CD4-positive, alpha-beta memory T cell (primary cell): ENCODE measurements at regions of chr1 and their contacts with region 1.

Region 1: GRCh38 chr1:193537266-193538002 is 351.0 kb upstream of the B3GALT2 start:
- DNase-seq: peak; percentile 61 to 80 (median 73)
- H3K4me3 ChIP-seq: peak overlapping the region in 1 of 2 donors; percentile 12
- H3K4me3 Mint-ChIP-seq: peak overlapping the region; percentile 79 to 88 (median 84)
- H3K27ac ChIP-seq: peak overlapping the region; percentile 71
- H3K27ac Mint-ChIP-seq: peak overlapping the region; percentile 83 to 95 (median 91)
- H3K4me1 ChIP-seq: peaks cover 58% of the 10 kb centered on the region
- H3K4me1 Mint-ChIP-seq: peaks cover 39 to 58% (median 47%) of the 10 kb centered on the region in 4 donors
- H3K27me3 ChIP-seq: no peaks in the 10 kb centered on the region
- H3K27me3 Mint-ChIP-seq: no peaks in the 10 kb centered on the region

Region 2: DNA sequence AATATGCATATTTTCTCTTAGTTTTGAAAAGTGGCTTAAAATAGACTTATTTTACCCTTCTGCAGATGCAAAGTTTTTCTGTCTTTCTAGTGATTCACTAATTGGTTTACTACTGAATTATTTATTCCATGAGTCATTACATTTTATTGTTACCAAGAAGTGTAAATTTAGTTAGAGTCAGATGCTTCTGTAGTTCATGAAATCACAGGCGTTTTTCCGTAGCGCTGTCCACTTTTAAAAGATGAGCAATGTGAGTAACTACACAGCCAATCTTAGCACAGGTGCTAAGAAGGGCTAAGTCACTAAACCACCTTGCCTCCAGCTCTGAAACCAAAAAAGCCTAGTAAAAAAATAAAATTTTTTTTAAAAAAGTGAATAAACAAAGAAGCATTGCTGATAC is 876.8 kb before region 1 on chr1:
- CTCF ChIA-PET with region 1: no interaction called
- POLR2A ChIA-PET with region 1: no interaction called
- intact Hi-C with region 1: no loop called
- DNase-seq: no peak
- H3K4me3 ChIP-seq: no peak overlapping the region
- H3K4me3 Mint-ChIP-seq: no peak overlapping the region
- H3K27ac ChIP-seq: no peak overlapping the region
- H3K27ac Mint-ChIP-seq: no peak overlapping the region
- H3K4me1 ChIP-seq: no peaks in the 10 kb centered on the region
- H3K4me1 Mint-ChIP-seq: no peaks in the 10 kb centered on the region
- H3K27me3 ChIP-seq: no peaks in the 10 kb centered on the region
- H3K27me3 Mint-ChIP-seq: peaks cover 0 to 3% of the 10 kb centered on the region in 2 donors

Region 3: GRCh38 chr1:193406901-193407300 is 130.5 kb before region 1 on chr1:
- CTCF ChIA-PET with region 1: no interaction called
- POLR2A ChIA-PET with region 1: interaction called, 3 read pairs
- intact Hi-C with region 1: loop called (anchors 2 kb)
- DNase-seq: peak in 4 of 5 donors; percentile 48 to 63 (median 56)
- H3K4me3 ChIP-seq: no peak overlapping the region
- H3K4me3 Mint-ChIP-seq: peak overlapping the region in 6 of 8 donors; percentile 0 to 29 (median 8)
- H3K27ac ChIP-seq: no peak overlapping the region
- H3K27ac Mint-ChIP-seq: peak overlapping the region in 4 of 7 donors; percentile 15 to 81 (median 52)
- H3K4me1 ChIP-seq: peaks cover 26% of the 10 kb centered on the region
- H3K4me1 Mint-ChIP-seq: peaks cover 21 to 40% (median 29%) of the 10 kb centered on the region in 4 donors
- H3K27me3 ChIP-seq: no peaks in the 10 kb centered on the region
- H3K27me3 Mint-ChIP-seq: no peaks in the 10 kb centered on the region

Region 4: DNA sequence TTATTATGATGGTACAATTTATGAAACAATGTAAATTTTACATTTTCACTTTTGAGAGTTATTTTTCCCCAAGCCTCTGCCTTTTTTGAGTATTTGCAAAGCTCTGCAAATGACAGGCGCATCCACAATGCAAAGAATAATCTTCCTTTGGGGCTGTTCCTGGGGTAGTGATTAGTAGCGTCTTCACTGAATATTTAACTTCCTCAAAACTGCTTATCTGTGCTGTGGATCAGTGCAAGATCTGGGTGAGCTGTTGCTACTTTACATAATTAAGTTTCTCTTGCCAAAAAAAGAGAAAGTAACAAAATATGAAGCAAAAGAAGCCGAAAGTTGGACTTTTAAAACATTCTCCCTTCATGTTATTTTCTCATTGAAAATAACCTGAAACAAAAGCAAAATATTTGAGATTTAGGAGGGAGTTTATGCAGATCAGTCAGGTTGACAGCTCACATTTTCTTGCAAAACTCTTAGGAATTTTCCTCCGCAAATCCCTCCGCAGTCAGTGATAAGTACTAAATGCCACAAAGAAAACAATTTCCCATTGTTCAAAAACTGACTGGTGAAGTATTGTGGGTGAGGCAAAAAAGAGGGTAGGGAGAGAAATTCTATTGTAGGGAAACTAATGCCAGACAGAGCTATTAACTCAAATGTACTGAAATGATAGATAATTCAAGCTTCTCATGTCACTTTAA is 74.7 kb before region 1 on chr1:
- CTCF ChIA-PET with region 1: interaction called, 9 read pairs
- POLR2A ChIA-PET with region 1: interaction called, 60 read pairs
- intact Hi-C with region 1: loop called (anchors 5 kb)
- DNase-seq: peak; percentile 31 to 59 (median 53)
- H3K4me3 ChIP-seq: peak overlapping the region in 1 of 2 donors; percentile 6
- H3K4me3 Mint-ChIP-seq: peak overlapping the region; percentile 47 to 84 (median 82)
- H3K27ac ChIP-seq: peak overlapping the region; percentile 48
- H3K27ac Mint-ChIP-seq: peak overlapping the region in 6 of 7 donors; percentile 87 to 98 (median 94)
- H3K4me1 ChIP-seq: peaks cover 67% of the 10 kb centered on the region
- H3K4me1 Mint-ChIP-seq: peaks cover 40 to 68% (median 46%) of the 10 kb centered on the region in 4 donors
- H3K27me3 ChIP-seq: no peaks in the 10 kb centered on the region
- H3K27me3 Mint-ChIP-seq: no peaks in the 10 kb centered on the region

Region 5: DNA sequence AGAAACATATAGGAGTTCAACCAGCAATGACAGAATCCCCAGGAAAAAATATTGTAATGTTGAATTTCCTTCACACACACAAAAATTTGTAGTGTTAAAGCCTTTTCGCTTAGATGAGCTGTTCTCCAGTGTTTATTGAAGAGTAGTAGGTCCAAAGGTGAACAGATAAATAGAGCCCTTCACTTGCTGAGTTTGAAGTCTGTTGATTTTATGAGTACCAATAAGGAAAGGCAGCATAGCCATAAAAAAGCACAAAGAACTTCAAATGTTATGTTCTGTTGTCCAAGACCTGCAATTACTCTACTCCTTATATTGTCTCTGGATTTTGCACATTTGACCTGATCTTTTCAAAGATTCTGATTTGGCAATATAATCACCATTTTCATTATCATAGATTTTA is 11.6 kb after region 1 on chr1:
- CTCF ChIA-PET with region 1: interaction called, 3 read pairs
- POLR2A ChIA-PET with region 1: interaction called, 22 read pairs
- intact Hi-C with region 1: loop called (anchors 1 kb)
- DNase-seq: no peak
- H3K4me3 ChIP-seq: no peak overlapping the region
- H3K4me3 Mint-ChIP-seq: peak overlapping the region in 5 of 8 donors; percentile 8 to 64 (median 50)
- H3K27ac ChIP-seq: no peak overlapping the region
- H3K27ac Mint-ChIP-seq: peak overlapping the region in 3 of 7 donors; percentile 29 to 51 (median 47)
- H3K4me1 ChIP-seq: peaks cover 12% of the 10 kb centered on the region
- H3K4me1 Mint-ChIP-seq: peaks cover 13 to 38% (median 24%) of the 10 kb centered on the region in 4 donors
- H3K27me3 ChIP-seq: no peaks in the 10 kb centered on the region
- H3K27me3 Mint-ChIP-seq: no peaks in the 10 kb centered on the region

Region 6: DNA sequence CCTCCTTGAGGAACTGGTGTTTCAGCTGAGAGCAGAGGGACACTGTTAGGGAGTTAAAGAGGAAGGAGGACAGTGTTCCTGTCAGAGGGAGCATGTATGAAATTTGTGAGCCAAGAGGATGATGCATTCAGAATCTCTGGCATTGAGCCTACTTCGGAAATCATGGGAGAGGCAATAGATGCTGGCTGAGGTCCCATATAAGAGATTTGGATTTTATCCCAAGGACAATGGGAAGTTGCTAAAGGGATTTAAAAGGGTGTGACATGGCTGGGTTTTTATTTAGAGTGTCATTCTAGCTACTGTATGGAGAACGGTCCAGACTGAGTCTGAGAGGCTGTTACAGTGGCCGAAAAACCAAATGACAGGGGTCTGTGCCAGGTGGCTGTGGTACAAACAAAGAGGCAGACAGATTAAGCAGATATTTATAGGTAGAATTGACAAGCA is 52.2 kb after region 1 on chr1:
- CTCF ChIA-PET with region 1: no interaction called
- POLR2A ChIA-PET with region 1: interaction called, 13 read pairs
- intact Hi-C with region 1: no loop called
- DNase-seq: no peak
- H3K4me3 ChIP-seq: no peak overlapping the region
- H3K4me3 Mint-ChIP-seq: peak overlapping the region in 3 of 8 donors; percentile 2 to 52 (median 2)
- H3K27ac ChIP-seq: no peak overlapping the region
- H3K27ac Mint-ChIP-seq: peak overlapping the region in 6 of 7 donors; percentile 14 to 86 (median 78)
- H3K4me1 ChIP-seq: peaks cover 40% of the 10 kb centered on the region
- H3K4me1 Mint-ChIP-seq: peaks cover 29 to 45% (median 37%) of the 10 kb centered on the region in 4 donors
- H3K27me3 ChIP-seq: no peaks in the 10 kb centered on the region
- H3K27me3 Mint-ChIP-seq: no peaks in the 10 kb centered on the region

Region 7: GRCh38 chr1:194289569-194290266 is 752.3 kb after region 1 on chr1:
- CTCF ChIA-PET with region 1: no interaction called
- POLR2A ChIA-PET with region 1: interaction called, 12 read pairs
- intact Hi-C with region 1: loop called (anchors 5 kb)
- DNase-seq: peak; percentile 72 to 89 (median 81)
- H3K4me3 ChIP-seq: peak overlapping the region; percentile 2 to 42
- H3K4me3 Mint-ChIP-seq: peak overlapping the region; percentile 60 to 84 (median 75)
- H3K27ac ChIP-seq: peak overlapping the region; percentile 50
- H3K27ac Mint-ChIP-seq: peak overlapping the region; percentile 12 to 86 (median 75)
- H3K4me1 ChIP-seq: peaks cover 22% of the 10 kb centered on the region
- H3K4me1 Mint-ChIP-seq: peaks cover 22 to 31% (median 24%) of the 10 kb centered on the region in 4 donors
- H3K27me3 ChIP-seq: no peaks in the 10 kb centered on the region
- H3K27me3 Mint-ChIP-seq: no peaks in the 10 kb centered on the region